ENCODE measurements at regions of chr14 and their contacts with region 1.

Region 1: DNA sequence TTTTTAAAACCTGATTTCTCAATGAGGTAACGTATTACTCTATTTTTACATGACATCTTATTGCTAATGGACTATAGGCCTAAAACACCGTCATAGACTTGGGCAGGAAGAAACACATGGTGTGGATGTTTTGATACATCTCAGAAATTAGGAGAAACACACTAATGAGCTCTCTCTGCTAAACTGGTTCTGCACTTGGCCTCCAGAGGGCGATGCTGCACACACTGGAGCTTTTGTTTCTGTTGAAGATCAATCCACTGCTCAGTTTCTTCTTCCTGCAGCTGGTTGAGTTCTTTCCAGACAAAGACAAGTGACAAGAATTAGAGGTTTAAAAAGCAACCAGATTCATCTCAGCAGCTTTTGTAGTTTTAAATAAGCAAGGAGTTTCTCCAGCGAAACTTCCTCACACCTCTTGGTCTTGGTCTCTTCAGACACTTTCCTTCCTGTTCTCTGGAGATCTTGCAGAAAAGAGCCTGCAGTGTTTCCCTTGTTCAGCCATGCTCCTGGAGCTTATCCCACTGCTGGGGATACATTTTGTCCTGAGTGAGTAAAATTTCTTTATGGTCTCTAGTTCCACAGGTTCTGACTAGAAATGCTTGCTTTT is 178.5 kb upstream of the OR4E1 start:
- DNase-seq: peak; percentile 78
- H3K4me3 Mint-ChIP-seq: peak overlapping the region; percentile 65
- H3K27ac Mint-ChIP-seq: peak overlapping the region; percentile 82
- H3K4me1 Mint-ChIP-seq: peaks cover 12% of the 10 kb centered on the region
- H3K27me3 Mint-ChIP-seq: peaks cover 23% of the 10 kb centered on the region

Region 2: GRCh38 chr14:21833836-21834235 is 18.3 kb before region 1 on chr14:
- CTCF ChIA-PET with region 1: interaction called, 11 read pairs
- POLR2A ChIA-PET with region 1: no interaction called
- DNase-seq: no peak
- H3K4me3 Mint-ChIP-seq: no peak overlapping the region
- H3K27ac Mint-ChIP-seq: no peak overlapping the region
- H3K4me1 Mint-ChIP-seq: peaks cover 3% of the 10 kb centered on the region
- H3K27me3 Mint-ChIP-seq: peaks cover 30% of the 10 kb centered on the region

Region 3: DNA sequence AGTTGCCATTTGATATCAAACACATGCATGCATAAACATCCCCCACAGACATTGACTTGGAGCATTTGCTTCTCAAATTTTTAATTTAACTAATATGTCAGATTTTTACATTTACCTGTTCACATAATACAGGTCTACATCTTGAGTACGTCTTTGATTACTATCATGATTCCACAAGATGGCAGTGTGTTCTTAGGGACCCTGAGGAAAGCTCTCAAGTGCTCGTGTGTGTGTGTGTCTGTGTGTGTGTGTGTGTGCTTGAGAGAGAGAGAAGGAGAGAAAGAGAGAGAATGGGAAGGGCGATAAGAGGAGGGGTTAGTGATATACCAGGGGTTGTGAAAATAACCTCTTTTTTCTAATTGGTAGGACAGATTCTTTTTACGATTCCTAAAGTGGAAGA is 11.4 kb before region 1 on chr14:
- CTCF ChIA-PET with region 1: interaction called, 10 read pairs
- POLR2A ChIA-PET with region 1: interaction called, 4 read pairs
- DNase-seq: no peak
- H3K4me3 Mint-ChIP-seq: peak overlapping the region; percentile 56
- H3K27ac Mint-ChIP-seq: peak overlapping the region; percentile 41
- H3K4me1 Mint-ChIP-seq: peaks cover 12% of the 10 kb centered on the region
- H3K27me3 Mint-ChIP-seq: peaks cover 23% of the 10 kb centered on the region

Region 4: GRCh38 chr14:21868442-21869046 is 16.4 kb after region 1 on chr14:
- CTCF ChIA-PET with region 1: interaction called, 13 read pairs
- POLR2A ChIA-PET with region 1: interaction called, 65 read pairs
- DNase-seq: peak; percentile 84
- H3K4me3 Mint-ChIP-seq: peak overlapping the region; percentile 60
- H3K27ac Mint-ChIP-seq: peak overlapping the region; percentile 50
- H3K4me1 Mint-ChIP-seq: peaks cover 30% of the 10 kb centered on the region
- H3K27me3 Mint-ChIP-seq: peaks cover 6% of the 10 kb centered on the region

Region 5: GRCh38 chr14:21917699-21918436 is 65.7 kb after region 1 on chr14:
- CTCF ChIA-PET with region 1: interaction called, 15 read pairs
- POLR2A ChIA-PET with region 1: no interaction called
- DNase-seq: peak; percentile 66
- H3K4me3 Mint-ChIP-seq: peak overlapping the region; percentile 71
- H3K27ac Mint-ChIP-seq: peak overlapping the region; percentile 74
- H3K4me1 Mint-ChIP-seq: peaks cover 69% of the 10 kb centered on the region
- H3K27me3 Mint-ChIP-seq: no peaks in the 10 kb centered on the region

Region 6: DNA sequence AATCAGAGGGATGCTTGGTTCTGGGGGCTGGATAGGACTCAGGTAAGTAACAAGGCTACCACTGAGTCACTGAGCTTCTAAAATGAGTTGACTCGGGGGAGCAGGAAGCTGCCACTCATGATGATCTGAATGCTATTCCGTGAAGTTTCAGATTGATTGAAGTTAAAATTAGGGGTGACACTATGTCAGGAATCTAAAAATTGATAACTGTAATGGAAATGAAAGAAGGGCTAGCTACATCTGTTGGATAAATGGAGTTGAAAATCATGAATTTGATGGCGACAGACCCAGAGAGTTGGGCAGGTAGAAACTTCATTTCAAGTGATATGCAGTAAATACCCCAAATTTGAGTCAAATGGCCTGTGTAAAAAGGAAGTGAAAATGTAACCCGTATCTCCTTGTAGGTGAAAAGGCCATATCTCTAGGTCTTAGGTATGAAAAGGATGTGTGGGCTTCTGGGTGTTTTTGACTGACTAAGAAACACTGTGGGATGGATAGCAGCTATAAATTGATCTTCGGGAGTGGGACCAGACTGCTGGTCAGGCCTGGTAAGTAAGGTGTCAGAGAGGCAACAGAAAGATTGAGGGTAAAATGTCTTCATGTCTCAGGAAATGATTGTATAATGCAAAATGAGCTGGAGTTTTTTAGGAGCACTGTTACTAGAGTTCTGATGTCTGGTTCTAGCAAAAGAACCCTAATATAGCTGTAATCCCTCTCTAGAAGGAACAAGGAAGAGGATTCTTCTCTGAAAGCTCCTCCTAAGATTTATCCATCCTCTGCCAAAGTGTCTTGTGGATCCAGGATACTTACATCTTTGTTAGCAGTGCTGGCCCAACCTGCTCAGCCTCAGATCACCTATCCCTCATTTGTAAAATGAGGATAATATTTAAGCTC is 679.5 kb after region 1 on chr14:
- CTCF ChIA-PET with region 1: no interaction called
- POLR2A ChIA-PET with region 1: interaction called, 12 read pairs
- DNase-seq: no peak
- H3K4me3 Mint-ChIP-seq: peak overlapping the region; percentile 82
- H3K27ac Mint-ChIP-seq: peak overlapping the region; percentile 96
- H3K4me1 Mint-ChIP-seq: peaks cover 90% of the 10 kb centered on the region
- H3K27me3 Mint-ChIP-seq: no peaks in the 10 kb centered on the region